ENCODE measurements at regions of chr3 and their contacts with region 1.

Region 1: DNA sequence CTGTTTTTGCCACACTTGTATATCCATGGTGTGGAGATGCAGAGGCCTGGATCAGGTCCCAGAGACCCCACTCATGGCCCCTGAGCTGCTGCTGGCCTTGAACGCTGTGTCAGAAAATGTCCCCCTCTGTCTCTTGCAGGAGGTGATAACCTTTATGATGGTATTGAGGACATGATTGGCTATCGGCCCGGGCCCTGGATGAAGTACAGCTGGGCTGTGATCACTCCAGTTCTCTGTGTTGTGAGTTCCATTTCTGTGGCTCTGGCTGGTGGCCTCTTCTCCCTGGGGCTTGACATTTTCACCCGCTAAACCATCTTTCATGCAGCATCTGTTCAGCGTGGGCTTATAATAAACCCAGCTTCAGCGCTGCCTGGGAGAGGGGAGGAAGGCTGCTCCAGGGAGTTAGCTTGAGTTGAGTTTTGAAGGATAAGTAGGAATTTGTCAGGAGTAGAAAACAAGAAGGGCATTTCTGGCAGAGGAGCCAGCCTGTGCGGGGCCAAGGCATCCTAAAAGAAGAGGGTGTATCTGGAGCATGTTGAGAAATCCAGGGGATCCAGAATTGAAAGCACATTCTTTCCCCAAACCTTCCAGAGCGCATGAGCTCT is 61.1 kb downstream of the GRIP2 start:
- H3K4me3 ChIP-seq: no peak overlapping the region
- H3K27ac ChIP-seq: no peak overlapping the region
- H3K4me1 ChIP-seq: no peaks in the 10 kb centered on the region
- CTCF ChIP-seq: no peak

Region 2: DNA sequence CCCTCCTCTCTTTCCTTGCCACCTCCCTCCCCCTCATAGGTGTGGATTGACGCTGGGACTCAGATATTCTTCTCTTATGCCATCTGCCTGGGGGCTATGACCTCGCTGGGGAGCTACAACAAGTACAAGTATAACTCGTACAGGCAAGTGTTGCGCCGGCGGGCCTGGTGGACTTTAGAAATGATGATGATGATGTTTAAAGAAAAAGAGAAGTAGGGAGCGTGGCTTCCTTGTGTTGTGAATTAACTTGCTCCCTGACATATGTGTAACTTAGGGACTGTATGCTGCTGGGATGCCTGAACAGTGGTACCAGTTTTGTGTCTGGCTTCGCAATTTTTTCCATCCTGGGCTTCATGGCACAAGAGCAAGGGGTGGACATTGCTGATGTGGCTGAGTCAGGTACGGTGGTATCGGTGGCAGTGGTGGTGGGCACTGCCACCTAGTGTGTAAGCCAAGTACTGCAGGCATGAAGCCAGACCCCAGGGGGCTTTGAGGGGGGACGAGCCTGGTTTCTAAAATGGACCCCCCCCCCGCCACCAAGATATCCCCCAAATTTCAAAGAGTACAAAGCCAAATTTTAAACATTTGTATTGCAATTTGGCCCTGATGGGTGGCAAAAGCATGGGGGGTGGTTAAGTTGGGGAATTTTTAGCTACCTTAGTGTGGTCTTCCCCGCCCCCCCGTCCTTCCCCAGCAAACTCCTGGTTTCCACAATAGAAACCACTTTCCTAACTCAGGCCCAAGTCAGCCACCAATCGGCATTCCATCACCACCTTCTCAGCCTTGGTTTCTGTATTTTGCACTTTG is 11.0 kb before region 1 on chr3:
- CTCF ChIA-PET with region 1: interaction called, 10 read pairs
- POLR2A ChIA-PET with region 1: no interaction called
- H3K4me3 ChIP-seq: no peak overlapping the region
- H3K27ac ChIP-seq: no peak overlapping the region
- H3K4me1 ChIP-seq: no peaks in the 10 kb centered on the region
- CTCF ChIP-seq: peak; percentile 75

Measured in HEK293 (cell line).